ENCODE measurements at regions of chr2 and their contacts with region 1.

Region 1: DNA sequence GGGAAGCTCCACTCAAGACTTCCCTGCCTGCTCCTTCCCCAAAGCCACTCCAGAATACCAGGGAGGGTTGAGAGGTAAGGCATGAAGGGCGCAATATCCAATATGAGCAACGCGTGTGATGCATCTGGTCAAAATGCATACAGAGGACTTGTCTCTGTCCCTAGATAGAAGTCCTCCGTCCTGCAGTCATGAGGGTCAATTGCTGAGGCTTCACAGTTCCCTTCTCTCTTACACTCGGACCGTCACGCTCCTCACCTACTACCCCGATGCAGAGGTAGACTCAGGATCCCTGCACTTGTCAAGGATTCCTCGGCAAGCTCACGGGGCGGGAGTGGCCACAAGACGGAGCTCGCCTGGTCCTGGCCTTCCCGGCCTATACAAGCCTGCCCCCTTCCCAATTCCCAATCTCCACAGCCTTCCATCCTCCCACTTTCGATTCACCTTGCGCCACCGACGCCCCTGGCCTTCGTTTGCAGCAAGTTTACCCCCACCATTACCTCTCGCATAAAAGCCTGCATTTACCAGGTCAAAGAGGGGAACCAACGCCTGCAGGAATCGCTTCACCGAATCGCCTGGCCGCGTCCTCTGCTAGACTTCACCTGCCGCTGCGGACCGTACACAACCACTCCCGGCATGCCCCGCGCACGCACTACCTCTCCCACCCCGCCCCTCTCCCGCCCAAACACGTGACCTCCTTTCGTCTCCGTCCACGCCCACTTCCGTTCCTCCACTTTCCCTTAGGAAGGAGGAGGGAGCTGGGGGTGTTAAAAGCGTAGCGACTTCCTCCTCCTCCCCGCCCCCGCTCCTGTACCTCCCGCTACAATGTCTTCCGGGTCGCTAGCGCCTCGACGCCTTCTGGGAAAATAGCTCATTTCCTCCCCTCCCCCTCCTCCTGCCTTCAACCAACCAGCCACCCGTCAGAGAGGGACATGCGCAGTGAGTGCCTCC is at the start of gene ORC4:
- DNase-seq: peak; percentile 70 to 98 (median 97)
- ATAC-seq: peak; percentile 94
- H3K4me3 ChIP-seq: peak within 1 kb of the TSS; percentile 89
- H3K4me3 Mint-ChIP-seq: peak within 1 kb of the TSS; percentile 92 to 100 (median 98)
- H3K27ac ChIP-seq: peak within 1 kb of the TSS; percentile 91
- H3K27ac Mint-ChIP-seq: peak within 1 kb of the TSS; percentile 89 to 99 (median 97)
- H3K4me1 ChIP-seq: peaks cover 20 to 36% of the 10 kb centered on the region in 2 donors
- H3K4me1 Mint-ChIP-seq: peaks cover 27 to 84% (median 70%) of the 10 kb centered on the region in 7 donors
- H3K27me3 ChIP-seq: no peaks in the 10 kb centered on the region
- H3K27me3 Mint-ChIP-seq: no peaks in the 10 kb centered on the region
- total RNA-seq, gene ORC4: 34.1 to 63.7 (median 44.8) TPM

Region 2: DNA sequence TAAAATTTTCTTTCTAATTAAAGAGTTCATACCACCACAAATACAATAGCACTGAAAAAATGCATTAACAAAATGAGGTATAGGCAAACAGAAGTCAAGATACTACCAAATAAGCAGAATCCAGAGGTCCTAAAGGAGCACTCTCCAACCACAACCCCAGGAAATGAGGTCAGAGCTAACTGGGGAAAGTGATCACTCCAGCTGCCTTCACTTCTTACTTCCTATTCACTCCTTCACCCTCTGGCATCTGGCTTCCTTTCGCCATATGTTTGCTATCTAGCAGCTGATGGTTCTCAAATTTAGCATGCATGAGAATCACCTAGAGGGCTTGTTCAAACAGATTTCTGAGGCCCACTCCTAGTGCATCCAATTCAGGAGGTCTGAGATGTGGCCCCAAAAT is 388.2 kb before region 1 on chr2:
- CTCF ChIA-PET with region 1: no interaction called
- POLR2A ChIA-PET with region 1: no interaction called
- intact Hi-C with region 1: loop called in 1 of 2 experiments (anchors 5 kb)
- DNase-seq: no peak
- ATAC-seq: no peak
- H3K4me3 ChIP-seq: no peak overlapping the region
- H3K4me3 Mint-ChIP-seq: peak overlapping the region in 2 of 10 donors; percentile 15 to 54
- H3K27ac ChIP-seq: no peak overlapping the region
- H3K27ac Mint-ChIP-seq: peak overlapping the region in 4 of 9 donors; percentile 34 to 77 (median 64)
- H3K4me1 ChIP-seq: peaks cover 5 to 22% of the 10 kb centered on the region in 2 donors
- H3K4me1 Mint-ChIP-seq: peaks cover 0 to 54% (median 10%) of the 10 kb centered on the region in 7 donors
- H3K27me3 ChIP-seq: no peaks in the 10 kb centered on the region
- H3K27me3 Mint-ChIP-seq: no peaks in the 10 kb centered on the region

Region 3: GRCh38 chr2:147867050-147867449 is 153.3 kb before region 1 on chr2:
- CTCF ChIA-PET with region 1: no interaction called
- POLR2A ChIA-PET with region 1: no interaction called
- intact Hi-C with region 1: no loop called
- DNase-seq: no peak
- ATAC-seq: peak; percentile 47
- H3K4me3 ChIP-seq: no peak overlapping the region
- H3K4me3 Mint-ChIP-seq: no peak overlapping the region
- H3K27ac ChIP-seq: no peak overlapping the region
- H3K27ac Mint-ChIP-seq: no peak overlapping the region
- H3K4me1 ChIP-seq: peaks cover 9 to 23% of the 10 kb centered on the region in 2 donors
- H3K4me1 Mint-ChIP-seq: peaks cover 4 to 43% (median 34%) of the 10 kb centered on the region in 7 donors
- H3K27me3 ChIP-seq: no peaks in the 10 kb centered on the region
- H3K27me3 Mint-ChIP-seq: no peaks in the 10 kb centered on the region

Region 4: GRCh38 chr2:148096012-148096411 is 75.6 kb after region 1 on chr2:
- CTCF ChIA-PET with region 1: no interaction called
- POLR2A ChIA-PET with region 1: no interaction called
- intact Hi-C with region 1: loop called in 1 of 2 experiments (anchors 5 kb)
- DNase-seq: no peak
- ATAC-seq: no peak
- H3K4me3 ChIP-seq: no peak overlapping the region
- H3K4me3 Mint-ChIP-seq: no peak overlapping the region
- H3K27ac ChIP-seq: no peak overlapping the region
- H3K27ac Mint-ChIP-seq: no peak overlapping the region
- H3K4me1 ChIP-seq: no peaks in the 10 kb centered on the region
- H3K4me1 Mint-ChIP-seq: peaks cover 0 to 11% (median 4%) of the 10 kb centered on the region in 7 donors
- H3K27me3 ChIP-seq: no peaks in the 10 kb centered on the region
- H3K27me3 Mint-ChIP-seq: no peaks in the 10 kb centered on the region

Region 5: GRCh38 chr2:148552675-148553331 is 532.4 kb after region 1 on chr2:
- CTCF ChIA-PET with region 1: no interaction called
- POLR2A ChIA-PET with region 1: interaction called, 9 read pairs
- intact Hi-C with region 1: loop called (anchors 1 kb)
- DNase-seq: peak in 7 of 9 donors; percentile 18 to 64 (median 53)
- ATAC-seq: peak; percentile 77
- H3K4me3 ChIP-seq: peak overlapping the region; percentile 75
- H3K4me3 Mint-ChIP-seq: no peak overlapping the region
- H3K27ac ChIP-seq: peak overlapping the region; percentile 70
- H3K27ac Mint-ChIP-seq: no peak overlapping the region
- H3K4me1 ChIP-seq: peaks cover 5 to 12% of the 10 kb centered on the region in 2 donors
- H3K4me1 Mint-ChIP-seq: peaks cover 1 to 13% (median 7%) of the 10 kb centered on the region in 7 donors
- H3K27me3 ChIP-seq: no peaks in the 10 kb centered on the region
- H3K27me3 Mint-ChIP-seq: no peaks in the 10 kb centered on the region

Region 6: GRCh38 chr2:148926291-148926961 is 906.0 kb after region 1 on chr2:
- CTCF ChIA-PET with region 1: no interaction called
- POLR2A ChIA-PET with region 1: no interaction called
- intact Hi-C with region 1: loop called in 1 of 2 experiments (anchors 1 kb)
- DNase-seq: peak; percentile 21 to 60 (median 48)
- ATAC-seq: peak; percentile 89
- H3K4me3 ChIP-seq: peak overlapping the region; percentile 43
- H3K4me3 Mint-ChIP-seq: peak overlapping the region; percentile 77 to 88 (median 84)
- H3K27ac ChIP-seq: no peak overlapping the region
- H3K27ac Mint-ChIP-seq: peak overlapping the region; percentile 29 to 94 (median 83)
- H3K4me1 ChIP-seq: peaks cover 0 to 7% of the 10 kb centered on the region in 2 donors
- H3K4me1 Mint-ChIP-seq: peaks cover 9 to 29% (median 22%) of the 10 kb centered on the region in 7 donors
- H3K27me3 ChIP-seq: no peaks in the 10 kb centered on the region
- H3K27me3 Mint-ChIP-seq: no peaks in the 10 kb centered on the region

Measured in naive thymus-derived CD4-positive, alpha-beta T cell (primary cell).